Activated T-helper 2 cell treated with anti-CD3 and anti-CD28 coated beads, Interferon-gamma antibody, Interleukin-2, Interleukin-4, amounts not matched to agents 10 μg/mL and 5 μg/mL and 100 μg/mL, durations not matched to agents 14 hours and 24 hours and 36 hours (primary cell): ENCODE measurements at regions of chr4 and their contacts with region 1.

Region 1: GRCh38 chr4:40438384-40439026 is 103.4 kb downstream of the CHRNA9 start:
- DNase-seq: no peak
- H3K4me3 Mint-ChIP-seq: no peak overlapping the region
- H3K27ac Mint-ChIP-seq: no peak overlapping the region
- H3K4me1 Mint-ChIP-seq: peaks cover 45% of the 10 kb centered on the region
- H3K27me3 Mint-ChIP-seq: no peaks in the 10 kb centered on the region

Region 2: DNA sequence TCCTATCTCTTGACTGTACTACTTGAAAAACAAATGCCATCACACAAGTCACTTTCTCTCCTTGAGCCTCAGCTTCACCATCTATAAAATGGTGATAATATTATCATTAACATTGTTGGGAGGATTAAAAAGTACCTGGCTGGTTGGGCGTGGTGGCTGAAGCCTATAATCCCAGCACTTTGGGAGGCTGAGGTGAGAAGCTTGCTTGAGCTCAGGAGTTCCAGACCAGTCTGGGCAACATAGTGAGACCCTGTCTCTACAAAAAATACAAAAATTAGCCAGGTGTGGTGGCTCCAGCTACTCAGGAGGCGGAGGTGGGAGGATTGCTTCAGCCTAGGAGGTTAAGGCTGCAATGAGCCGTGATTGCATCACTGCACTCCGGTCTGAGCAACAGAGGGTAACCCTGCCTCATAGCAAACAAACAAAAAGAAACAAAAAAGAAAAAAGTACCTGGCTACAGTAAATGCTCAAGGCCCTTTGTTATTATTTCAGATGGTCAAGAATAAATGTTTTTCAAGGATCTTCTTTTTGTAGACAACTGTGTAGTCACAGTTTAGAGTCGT is 16.9 kb after region 1 on chr4:
- intact Hi-C with region 1: loop called (anchors 1 kb)
- DNase-seq: no peak
- H3K4me3 Mint-ChIP-seq: no peak overlapping the region
- H3K27ac Mint-ChIP-seq: no peak overlapping the region
- H3K4me1 Mint-ChIP-seq: peaks cover 28% of the 10 kb centered on the region
- H3K27me3 Mint-ChIP-seq: no peaks in the 10 kb centered on the region

Region 3: GRCh38 chr4:40502934-40503333 is 64.4 kb after region 1 on chr4:
- intact Hi-C with region 1: loop called (anchors 10 kb)
- DNase-seq: no peak
- H3K4me3 Mint-ChIP-seq: peak overlapping the region; percentile 28
- H3K27ac Mint-ChIP-seq: peak overlapping the region; percentile 88
- H3K4me1 Mint-ChIP-seq: peaks cover 19% of the 10 kb centered on the region
- H3K27me3 Mint-ChIP-seq: no peaks in the 10 kb centered on the region

Region 4: GRCh38 chr4:40550948-40551462 is 112.5 kb after region 1 on chr4:
- intact Hi-C with region 1: loop called (anchors 10 kb)
- DNase-seq: peak; percentile 21
- H3K4me3 Mint-ChIP-seq: peak overlapping the region; percentile 81
- H3K27ac Mint-ChIP-seq: peak overlapping the region; percentile 87
- H3K4me1 Mint-ChIP-seq: peaks cover 48% of the 10 kb centered on the region
- H3K27me3 Mint-ChIP-seq: no peaks in the 10 kb centered on the region

Region 5: GRCh38 chr4:40672536-40673526 is 234.3 kb after region 1 on chr4:
- intact Hi-C with region 1: loop called (anchors 5 kb)
- DNase-seq: peak; percentile 63
- H3K4me3 Mint-ChIP-seq: peak overlapping the region; percentile 51
- H3K27ac Mint-ChIP-seq: peak overlapping the region; percentile 90
- H3K4me1 Mint-ChIP-seq: peaks cover 53% of the 10 kb centered on the region
- H3K27me3 Mint-ChIP-seq: no peaks in the 10 kb centered on the region